H1 (cell line): ENCODE measurements at regions of chr4 and their contacts with region 1.

Region 1: GRCh38 chr4:135371137-135371536 is 1169.5 kb upstream of the PABPC4L start:
- DNase-seq: peak; percentile 10 to 58
- H3K4me3 ChIP-seq: no peak overlapping the region
- H3K27ac ChIP-seq: no peak overlapping the region
- H3K4me1 ChIP-seq: no peaks in the 10 kb centered on the region
- H3K27me3 ChIP-seq: no peaks in the 10 kb centered on the region
- CTCF ChIP-seq: peak; percentile 27 to 61 (median 57)
- EP300 ChIP-seq: no peak
- POLR2A ChIP-seq: no peak
- RAD21 ChIP-seq: peak; percentile 49 to 57; a peak in 3 of 4 replicates

Region 2: GRCh38 chr4:135357091-135357490 is 14.0 kb before region 1 on chr4:
- CTCF ChIA-PET with region 1: interaction called, 12 read pairs
- POLR2A ChIA-PET with region 1: no interaction called
- DNase-seq: no peak
- H3K4me3 ChIP-seq: no peak overlapping the region
- H3K27ac ChIP-seq: no peak overlapping the region
- H3K4me1 ChIP-seq: no peaks in the 10 kb centered on the region
- H3K27me3 ChIP-seq: no peaks in the 10 kb centered on the region
- CTCF ChIP-seq: no peak
- EP300 ChIP-seq: no peak
- POLR2A ChIP-seq: no peak
- RAD21 ChIP-seq: no peak

Region 3: GRCh38 chr4:135382280-135382959 is 11.3 kb after region 1 on chr4:
- CTCF ChIA-PET with region 1: interaction called, 27 read pairs
- POLR2A ChIA-PET with region 1: no interaction called
- DNase-seq: peak in 1 of 2 experiments; percentile 46
- H3K4me3 ChIP-seq: no peak overlapping the region
- H3K27ac ChIP-seq: no peak overlapping the region
- H3K4me1 ChIP-seq: peaks cover 0 to 16% (median 3%) of the 10 kb centered on the region in 4 experiments; a peak in 3 of 7 replicates
- H3K27me3 ChIP-seq: no peaks in the 10 kb centered on the region
- CTCF ChIP-seq: no peak
- EP300 ChIP-seq: no peak
- POLR2A ChIP-seq: no peak
- RAD21 ChIP-seq: no peak